GM12878 (cell line): ENCODE measurements at regions of chr14 and their contacts with region 1.

Region 1: GRCh38 chr14:67571272-67571850 is 28.7 kb downstream of the PIGH start:
- DNase-seq: no peak
- ATAC-seq: peak; percentile 98
- H3K4me3 ChIP-seq: no peak overlapping the region
- H3K27ac ChIP-seq: no peak overlapping the region
- H3K4me1 ChIP-seq: no peaks in the 10 kb centered on the region
- H3K27me3 ChIP-seq: no peaks in the 10 kb centered on the region
- CTCF ChIP-seq: peak; percentile 91 to 96 (median 96); a peak in 5 of 6 replicates
- EP300 ChIP-seq: no peak
- POLR2A ChIP-seq: no peak
- RAD21 ChIP-seq: peak; percentile 92

Region 2: DNA sequence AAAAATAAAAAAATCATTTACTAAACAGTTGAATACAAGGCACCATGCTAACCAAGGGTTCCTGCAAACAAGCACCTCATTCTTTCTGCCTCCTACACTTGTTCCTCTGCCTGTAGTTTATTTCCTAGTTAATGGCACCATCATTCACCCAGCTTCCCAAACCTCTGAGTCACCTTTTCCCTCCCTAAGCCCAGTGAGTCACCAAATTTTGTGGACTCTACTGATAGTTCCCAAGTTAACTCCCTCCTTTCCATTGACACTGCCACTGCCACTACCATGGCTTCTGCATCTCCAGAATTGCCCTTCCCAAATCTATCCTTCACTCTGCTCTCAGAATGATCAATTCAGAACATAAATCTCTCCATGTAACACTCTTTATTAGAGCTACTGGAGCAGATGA is 384.2 kb before region 1 on chr14:
- CTCF ChIA-PET with region 1: no interaction called
- POLR2A ChIA-PET with region 1: no interaction called
- RAD21 ChIA-PET with region 1: no interaction called
- SMC1A ChIA-PET with region 1: no interaction called
- in situ Hi-C with region 1: no loop called
- intact Hi-C with region 1: no loop called
- DNase-seq: no peak
- ATAC-seq: no peak
- H3K4me3 ChIP-seq: no peak overlapping the region
- H3K27ac ChIP-seq: no peak overlapping the region
- H3K4me1 ChIP-seq: peaks cover 7% of the 10 kb centered on the region; the same call in 1 of the 2 replicates
- H3K27me3 ChIP-seq: no peaks in the 10 kb centered on the region
- CTCF ChIP-seq: no peak
- EP300 ChIP-seq: no peak
- POLR2A ChIP-seq: no peak
- RAD21 ChIP-seq: no peak

Region 3: GRCh38 chr14:67311905-67312304 is 259.5 kb before region 1 on chr14:
- CTCF ChIA-PET with region 1: no interaction called
- POLR2A ChIA-PET with region 1: no interaction called
- RAD21 ChIA-PET with region 1: no interaction called
- SMC1A ChIA-PET with region 1: no interaction called
- in situ Hi-C with region 1: no loop called
- intact Hi-C with region 1: no loop called
- DNase-seq: no peak
- ATAC-seq: no peak
- H3K4me3 ChIP-seq: no peak overlapping the region
- H3K27ac ChIP-seq: no peak overlapping the region
- H3K4me1 ChIP-seq: no peaks in the 10 kb centered on the region
- H3K27me3 ChIP-seq: no peaks in the 10 kb centered on the region
- CTCF ChIP-seq: no peak
- EP300 ChIP-seq: no peak
- POLR2A ChIP-seq: no peak
- RAD21 ChIP-seq: no peak

Region 4: GRCh38 chr14:67387195-67387594 is 184.2 kb before region 1 on chr14:
- CTCF ChIA-PET with region 1: interaction called, 13 read pairs
- POLR2A ChIA-PET with region 1: no interaction called
- RAD21 ChIA-PET with region 1: no interaction called
- SMC1A ChIA-PET with region 1: no interaction called
- in situ Hi-C with region 1: no loop called
- intact Hi-C with region 1: no loop called
- DNase-seq: no peak
- ATAC-seq: no peak
- H3K4me3 ChIP-seq: no peak overlapping the region
- H3K27ac ChIP-seq: no peak overlapping the region
- H3K4me1 ChIP-seq: no peaks in the 10 kb centered on the region
- H3K27me3 ChIP-seq: no peaks in the 10 kb centered on the region
- CTCF ChIP-seq: no peak
- EP300 ChIP-seq: no peak
- POLR2A ChIP-seq: no peak
- RAD21 ChIP-seq: no peak

Region 5: DNA sequence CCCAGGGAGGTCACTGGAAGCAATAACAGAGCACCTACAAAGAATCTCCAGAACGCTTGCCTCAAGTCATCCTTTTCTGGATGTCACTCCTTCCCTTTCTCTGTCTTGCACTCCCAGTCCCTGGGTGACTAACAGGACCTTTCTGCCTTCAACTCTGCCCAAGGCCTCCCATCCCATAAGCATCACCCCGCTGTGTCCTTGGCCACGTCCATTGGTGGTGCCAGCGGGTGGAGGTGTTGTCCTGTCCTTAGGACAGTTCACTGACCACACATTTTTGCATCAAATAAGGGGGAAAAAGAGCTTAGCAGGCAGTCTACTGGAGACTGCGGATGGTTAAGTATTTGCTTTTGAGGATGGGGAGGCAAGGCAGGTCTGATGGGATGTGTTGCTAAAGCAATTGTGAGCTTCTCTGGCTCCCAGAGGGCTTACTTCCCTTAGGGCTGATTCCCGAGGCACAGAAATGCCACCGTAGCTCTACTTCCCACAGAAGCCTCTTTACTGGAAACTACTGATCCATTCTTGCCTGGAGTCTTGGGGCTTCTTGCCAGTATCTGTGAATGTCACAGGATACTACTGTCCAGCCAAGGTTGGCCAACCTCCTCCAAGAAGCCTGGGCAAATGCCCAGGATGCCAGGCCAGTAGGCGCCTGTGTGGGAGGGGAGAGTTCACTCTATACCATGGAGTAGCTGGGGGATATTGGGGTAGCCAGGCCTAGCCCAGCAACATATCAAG is 135.6 kb before region 1 on chr14:
- CTCF ChIA-PET with region 1: interaction called, 583 read pairs
- POLR2A ChIA-PET with region 1: no interaction called
- RAD21 ChIA-PET with region 1: interaction called, 176 read pairs
- SMC1A ChIA-PET with region 1: interaction called, 185 read pairs
- in situ Hi-C with region 1: no loop called
- intact Hi-C with region 1: no loop called
- DNase-seq: no peak
- ATAC-seq: no peak
- H3K4me3 ChIP-seq: no peak overlapping the region
- H3K27ac ChIP-seq: no peak overlapping the region
- H3K4me1 ChIP-seq: no peaks in the 10 kb centered on the region
- H3K27me3 ChIP-seq: peaks cover 0 to 2% of the 10 kb centered on the region in 2 experiments; a peak in 3 of 4 replicates
- CTCF ChIP-seq: no peak
- EP300 ChIP-seq: no peak
- POLR2A ChIP-seq: no peak
- RAD21 ChIP-seq: no peak

Region 6: GRCh38 chr14:67532998-67533753 is 38.2 kb before region 1 on chr14 and contains the start of gene PLEKHH1:
- CTCF ChIA-PET with region 1: interaction called, 106 read pairs
- POLR2A ChIA-PET with region 1: interaction called, 3 read pairs
- RAD21 ChIA-PET with region 1: interaction called, 5 read pairs
- SMC1A ChIA-PET with region 1: interaction called, 54 read pairs
- in situ Hi-C with region 1: no loop called
- intact Hi-C with region 1: no loop called
- DNase-seq: no peak
- ATAC-seq: peak; percentile 95
- H3K4me3 ChIP-seq: peak within 1 kb of the TSS; percentile 68
- H3K27ac ChIP-seq: no peak within 1 kb of the TSS
- H3K4me1 ChIP-seq: no peaks in the 10 kb centered on the region
- H3K27me3 ChIP-seq: peaks cover 0 to 15% of the 10 kb centered on the region in 2 experiments
- CTCF ChIP-seq: no peak
- EP300 ChIP-seq: no peak
- POLR2A ChIP-seq: no peak
- RAD21 ChIP-seq: no peak
- polyA plus RNA-seq, gene PLEKHH1: 0.11 to 0.22 TPM

Region 7: DNA sequence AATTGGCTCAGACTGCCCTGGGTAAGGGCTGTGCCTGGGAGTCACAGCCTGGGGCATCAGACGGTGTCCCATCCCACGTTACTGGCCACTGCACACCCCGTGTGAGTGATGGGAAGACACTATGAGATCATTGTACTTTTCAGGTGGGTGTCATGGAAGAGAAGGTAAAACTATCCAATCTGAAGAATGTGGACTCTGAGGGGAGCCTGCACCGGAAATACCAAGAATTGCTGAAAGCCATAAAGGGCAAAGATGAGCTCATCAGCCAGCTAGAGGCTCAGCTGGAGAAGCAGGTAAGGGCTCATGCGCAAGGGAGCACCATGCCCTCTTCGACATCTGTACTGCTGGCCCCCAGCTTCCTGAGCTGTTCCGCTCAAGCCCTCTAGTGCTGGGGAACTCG is 14.2 kb before region 1 on chr14:
- CTCF ChIA-PET with region 1: interaction called, 20 read pairs
- POLR2A ChIA-PET with region 1: interaction called, 4 read pairs
- RAD21 ChIA-PET with region 1: interaction called, 12 read pairs
- SMC1A ChIA-PET with region 1: interaction called, 8 read pairs
- in situ Hi-C with region 1: no loop called
- intact Hi-C with region 1: no loop called
- DNase-seq: no peak
- ATAC-seq: no peak
- H3K4me3 ChIP-seq: no peak overlapping the region
- H3K27ac ChIP-seq: no peak overlapping the region
- H3K4me1 ChIP-seq: no peaks in the 10 kb centered on the region
- H3K27me3 ChIP-seq: no peaks in the 10 kb centered on the region; a peak in 1 of 4 replicates
- CTCF ChIP-seq: no peak
- EP300 ChIP-seq: no peak
- POLR2A ChIP-seq: no peak
- RAD21 ChIP-seq: no peak